AG04450 (cell line): ENCODE measurements at regions of chr22 and their contacts with region 1.

Region 1: DNA sequence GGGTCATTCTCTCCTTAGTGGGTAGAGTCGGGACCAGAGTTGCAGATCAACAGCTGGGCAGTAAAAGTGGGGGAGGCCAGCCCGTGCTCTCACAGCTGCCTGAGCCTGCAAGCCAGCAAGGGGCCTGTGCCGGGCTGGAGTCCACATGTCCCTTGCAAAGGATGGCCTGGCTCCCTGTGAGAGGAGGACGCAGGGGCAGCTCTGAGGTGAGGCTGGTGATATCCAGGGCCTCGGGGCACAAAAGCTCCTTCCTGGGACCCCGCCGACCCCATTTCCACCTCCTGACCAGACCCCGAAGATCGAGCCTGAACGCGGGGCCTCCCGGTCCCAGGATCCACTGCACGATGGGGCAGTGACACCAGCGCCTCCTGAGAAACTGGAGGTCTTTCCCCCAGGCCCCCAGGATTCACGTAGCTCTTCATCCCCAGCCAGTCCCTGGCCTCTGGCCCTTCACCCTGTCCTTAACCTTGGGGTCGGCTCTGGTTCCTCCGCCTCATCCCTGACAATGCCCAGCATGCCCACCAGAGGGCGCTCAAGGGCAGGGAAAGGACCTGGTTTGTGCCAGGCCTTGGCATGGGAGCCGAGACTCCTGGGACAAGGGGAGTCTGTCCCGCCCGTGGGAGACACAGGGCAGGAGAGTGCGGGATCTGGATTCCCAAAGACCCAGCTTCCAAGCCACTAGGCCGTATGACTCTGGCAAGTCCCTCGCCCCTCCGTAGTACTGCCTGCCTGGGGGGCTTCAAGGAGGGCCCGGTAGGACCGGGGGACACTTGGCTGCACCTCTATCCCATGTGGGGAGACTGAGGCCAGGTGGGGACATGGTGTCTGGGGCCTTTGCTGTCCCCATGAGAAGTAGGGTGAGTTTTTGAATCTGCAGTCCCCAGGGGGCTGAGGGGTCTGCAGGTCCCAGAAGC is 17.8 kb upstream of the WNT7B start:
- DNase-seq: no peak
- H3K4me3 ChIP-seq: no peak overlapping the region
- H3K27ac ChIP-seq: no peak overlapping the region
- H3K27me3 ChIP-seq: peaks cover 7% of the 10 kb centered on the region
- CTCF ChIP-seq: peak; percentile 94

Region 2: GRCh38 chr22:45984316-45984916 is 10.3 kb before region 1 on chr22:
- CTCF ChIA-PET with region 1: interaction called, 10 read pairs
- POLR2A ChIA-PET with region 1: interaction called, 3 read pairs
- DNase-seq: no peak
- H3K4me3 ChIP-seq: no peak overlapping the region
- H3K27ac ChIP-seq: no peak overlapping the region
- H3K27me3 ChIP-seq: peaks cover 25% of the 10 kb centered on the region
- CTCF ChIP-seq: no peak

Region 3: GRCh38 chr22:46070803-46071450 is 76.2 kb after region 1 on chr22:
- CTCF ChIA-PET with region 1: interaction called, 6 read pairs
- POLR2A ChIA-PET with region 1: interaction called, 11 read pairs
- DNase-seq: no peak
- H3K4me3 ChIP-seq: peak overlapping the region; percentile 86
- H3K27ac ChIP-seq: peak overlapping the region; percentile 94
- H3K27me3 ChIP-seq: no peaks in the 10 kb centered on the region
- CTCF ChIP-seq: no peak

Region 4: DNA sequence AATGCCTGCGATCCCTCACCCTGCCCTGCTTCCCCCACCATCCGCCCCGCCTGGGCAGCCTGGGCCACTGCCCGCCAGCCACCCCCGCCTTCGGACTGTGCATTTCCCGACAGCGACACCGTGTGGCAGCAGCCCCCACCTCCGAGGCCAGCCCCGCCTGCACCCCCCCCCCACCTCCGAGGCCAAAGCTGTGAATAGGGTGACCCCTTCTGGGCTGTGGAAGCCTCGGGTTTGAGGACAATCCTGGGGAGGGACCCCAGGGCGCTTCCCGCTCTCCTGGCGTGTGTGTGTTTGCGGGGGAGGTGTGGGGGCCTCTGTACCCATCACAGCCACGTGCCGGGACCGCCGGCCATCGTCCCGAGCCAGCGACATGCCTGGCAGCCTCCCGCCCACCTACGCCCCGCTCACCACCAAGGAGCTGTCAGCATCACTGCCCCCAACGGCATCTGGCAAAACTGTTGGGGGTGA is 121.8 kb after region 1 on chr22:
- CTCF ChIA-PET with region 1: interaction called, 40 read pairs
- POLR2A ChIA-PET with region 1: interaction called, 6 read pairs
- DNase-seq: peak; percentile 29
- H3K4me3 ChIP-seq: no peak overlapping the region
- H3K27ac ChIP-seq: peak overlapping the region; percentile 31
- H3K27me3 ChIP-seq: no peaks in the 10 kb centered on the region
- CTCF ChIP-seq: peak; percentile 60

Region 5: GRCh38 chr22:46122511-46122971 is 127.8 kb after region 1 on chr22:
- CTCF ChIA-PET with region 1: interaction called, 40 read pairs
- POLR2A ChIA-PET with region 1: interaction called, 6 read pairs
- DNase-seq: no peak
- H3K4me3 ChIP-seq: no peak overlapping the region
- H3K27ac ChIP-seq: no peak overlapping the region
- H3K27me3 ChIP-seq: no peaks in the 10 kb centered on the region
- CTCF ChIP-seq: peak; percentile 80

Region 6: DNA sequence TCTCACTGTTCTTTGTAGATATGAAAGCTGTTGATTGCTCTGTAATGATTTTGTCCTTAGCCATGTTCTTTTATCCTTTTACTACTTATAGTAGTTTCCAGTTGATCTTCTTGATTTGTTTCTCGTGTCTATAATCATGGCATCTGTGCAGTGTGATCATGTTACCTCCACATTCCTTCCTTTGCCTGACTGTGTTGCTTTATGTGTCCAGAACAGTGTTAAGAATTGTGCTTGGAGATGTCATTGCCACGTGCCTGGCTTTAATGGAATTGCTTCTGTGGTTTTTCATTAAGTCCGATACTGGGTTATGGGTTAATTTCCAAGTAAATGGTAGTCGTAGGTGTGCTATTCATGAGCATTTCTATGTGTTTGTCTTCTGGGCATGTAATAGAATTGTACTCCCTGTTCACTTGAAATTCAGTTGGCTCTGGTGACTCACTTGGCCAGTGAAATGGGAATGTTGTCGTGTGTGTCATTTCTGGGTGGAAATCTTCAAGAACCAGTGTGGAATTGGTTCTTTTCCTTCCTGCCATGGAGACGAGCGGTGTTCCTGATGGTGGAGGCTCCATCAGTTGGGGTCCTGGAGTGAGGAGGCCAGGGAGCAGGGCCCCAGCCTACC is 308.7 kb after region 1 on chr22:
- CTCF ChIA-PET with region 1: interaction called, 10 read pairs
- POLR2A ChIA-PET with region 1: no interaction called
- DNase-seq: no peak
- H3K4me3 ChIP-seq: no peak overlapping the region
- H3K27ac ChIP-seq: peak overlapping the region; percentile 39
- H3K27me3 ChIP-seq: no peaks in the 10 kb centered on the region
- CTCF ChIP-seq: no peak

Region 7: GRCh38 chr22:46317646-46318045 is 322.9 kb after region 1 on chr22:
- CTCF ChIA-PET with region 1: interaction called, 78 read pairs
- POLR2A ChIA-PET with region 1: interaction called, 8 read pairs
- DNase-seq: no peak
- H3K4me3 ChIP-seq: no peak overlapping the region
- H3K27ac ChIP-seq: no peak overlapping the region
- H3K27me3 ChIP-seq: no peaks in the 10 kb centered on the region
- CTCF ChIP-seq: no peak